ENCODE measurements at regions of chr12 and their contacts with region 1.

Region 1: DNA sequence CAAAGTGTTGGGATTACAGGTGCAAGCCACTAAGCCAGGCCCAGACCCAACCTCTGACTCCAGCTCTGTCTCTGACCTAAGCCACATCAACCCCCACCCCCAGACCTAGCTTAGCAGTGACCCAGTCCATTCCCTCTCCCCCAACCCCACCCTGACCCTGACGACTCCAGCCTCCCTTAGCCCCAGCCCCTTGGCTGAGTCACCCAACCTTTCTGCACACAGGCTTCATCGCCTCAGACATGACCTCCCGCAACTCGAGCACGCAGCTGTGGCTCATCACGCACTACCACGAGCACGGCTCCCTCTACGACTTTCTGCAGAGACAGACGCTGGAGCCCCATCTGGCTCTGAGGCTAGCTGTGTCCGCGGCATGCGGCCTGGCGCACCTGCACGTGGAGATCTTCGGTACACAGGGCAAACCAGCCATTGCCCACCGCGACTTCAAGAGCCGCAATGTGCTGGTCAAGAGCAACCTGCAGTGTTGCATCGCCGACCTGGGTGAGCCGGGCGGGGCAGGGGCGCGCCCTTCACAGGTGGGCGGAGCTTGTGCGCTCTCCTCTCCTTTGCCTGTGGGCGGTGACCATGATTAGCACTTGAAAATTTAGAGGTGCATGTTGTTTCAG is 7.8 kb downstream of the ACVRL1 start:
- DNase-seq: peak in 1 of 2 experiments; percentile 24
- H3K4me3 ChIP-seq: no peak overlapping the region
- H3K4me3 Mint-ChIP-seq: no peak overlapping the region
- H3K27ac Mint-ChIP-seq: peak overlapping the region; percentile 69
- H3K4me1 ChIP-seq: no peaks in the 10 kb centered on the region; the same call in 1 of the 2 replicates
- H3K4me1 Mint-ChIP-seq: peaks cover 9% of the 10 kb centered on the region
- H3K27me3 ChIP-seq: no peaks in the 10 kb centered on the region
- H3K27me3 Mint-ChIP-seq: no peaks in the 10 kb centered on the region
- CTCF ChIP-seq: no peak

Region 2: DNA sequence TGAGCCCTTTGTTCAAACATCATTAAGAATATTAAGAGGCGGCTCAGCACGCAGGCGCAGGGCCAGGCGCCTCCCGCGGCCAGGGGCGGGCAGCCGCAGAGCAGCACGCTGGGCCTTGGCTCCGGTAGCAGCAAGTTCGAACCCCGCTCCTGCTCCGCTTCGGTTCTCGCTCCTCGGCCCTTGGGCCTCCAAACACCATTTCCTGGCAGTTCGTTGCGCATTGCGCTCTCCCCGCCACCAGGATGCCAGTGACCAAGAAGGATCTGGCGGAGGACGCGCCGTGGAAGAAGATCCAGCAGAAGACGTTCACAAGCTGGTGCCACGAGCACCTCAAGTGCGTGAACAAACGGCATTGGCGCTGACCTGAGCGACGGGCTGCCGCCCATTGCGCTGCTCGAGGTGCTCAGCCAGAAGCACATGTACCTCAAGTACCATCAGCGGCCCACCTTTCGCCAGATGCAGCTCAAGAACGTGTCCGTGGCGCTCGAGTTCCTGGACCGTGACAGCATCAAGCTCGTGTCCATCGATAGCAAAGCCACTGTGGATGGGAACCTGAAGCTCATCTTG is 14.7 kb before region 1 on chr12:
- CTCF ChIA-PET with region 1: interaction called, 11 read pairs
- POLR2A ChIA-PET with region 1: no interaction called
- intact Hi-C with region 1: no loop called
- DNase-seq: no peak
- H3K4me3 ChIP-seq: no peak overlapping the region
- H3K4me3 Mint-ChIP-seq: no peak overlapping the region
- H3K27ac Mint-ChIP-seq: no peak overlapping the region
- H3K4me1 ChIP-seq: peaks cover 6% of the 10 kb centered on the region; the same call in 1 of the 2 replicates
- H3K4me1 Mint-ChIP-seq: peaks cover under 1% of the 10 kb centered on the region
- H3K27me3 ChIP-seq: no peaks in the 10 kb centered on the region
- H3K27me3 Mint-ChIP-seq: no peaks in the 10 kb centered on the region
- CTCF ChIP-seq: no peak